HEK293T (cell line): ENCODE measurements at regions of chr4 and their contacts with region 1.

Region 1: DNA sequence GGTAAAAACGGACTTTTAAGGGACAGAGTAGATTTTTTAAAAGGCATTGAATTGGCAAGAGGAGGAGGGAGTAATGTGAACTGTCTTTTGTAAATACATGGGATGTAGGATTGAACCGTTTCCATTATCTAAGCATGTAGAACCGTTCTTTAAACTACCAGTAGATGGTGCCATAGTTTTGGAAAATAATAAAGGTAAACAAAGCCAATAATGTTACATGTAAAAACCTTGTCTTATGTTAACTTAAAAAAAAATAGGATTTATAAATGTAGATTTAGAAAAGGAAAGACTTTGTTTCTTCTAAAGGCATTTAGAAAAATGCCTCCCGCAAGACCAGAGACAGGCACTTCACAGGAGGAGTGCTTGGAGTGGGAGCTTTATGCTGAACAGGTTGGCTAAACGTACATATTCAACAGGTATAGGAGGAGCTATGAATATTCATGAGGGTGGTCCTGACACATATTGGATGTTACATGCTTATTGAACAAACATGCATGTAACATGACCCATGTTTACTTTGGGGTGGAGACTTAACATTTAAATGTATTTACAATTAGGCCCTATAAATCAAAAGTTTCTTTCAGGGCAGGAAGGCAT is 45.5 kb upstream of the FAM241A start:
- DNase-seq: peak; percentile 30

Region 2: DNA sequence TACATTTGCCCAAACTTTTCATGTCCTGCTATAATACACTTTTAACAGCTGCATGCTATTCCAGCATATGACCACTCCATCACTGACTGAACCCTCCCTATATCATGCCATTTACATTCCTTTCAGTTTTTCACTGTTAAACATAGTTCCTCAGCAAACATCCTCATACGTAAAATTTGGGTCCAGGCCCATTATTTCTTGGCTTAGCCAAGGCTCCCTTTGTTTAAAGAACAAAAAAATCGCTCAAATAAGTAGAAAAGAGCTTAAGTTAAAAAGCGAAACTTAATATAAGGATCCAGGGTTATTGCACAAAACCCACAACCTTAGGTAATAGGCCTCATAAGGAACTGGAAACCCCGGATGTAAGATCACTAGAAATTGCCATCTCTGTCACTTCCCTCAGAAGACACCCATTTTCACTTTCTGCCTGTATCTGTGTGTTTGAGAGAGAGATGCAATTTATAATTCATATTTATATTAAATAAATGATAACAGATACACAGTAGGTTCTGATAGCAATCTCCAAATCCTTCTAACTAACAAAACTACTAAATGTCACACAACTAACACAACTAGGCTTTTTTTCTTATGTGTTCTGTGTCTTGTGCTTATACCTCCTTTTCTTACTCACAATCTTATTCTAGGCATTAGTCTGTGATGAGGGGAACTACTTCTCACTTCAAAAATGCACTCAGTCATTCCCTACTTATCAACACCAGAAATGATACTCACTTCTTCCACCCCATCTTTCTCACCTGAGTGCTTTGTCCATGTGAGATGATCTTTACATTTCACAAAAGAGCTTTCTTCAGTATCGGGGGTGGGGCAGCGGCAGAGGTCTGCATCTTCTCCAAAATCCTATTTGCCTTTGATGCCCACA is 14.4 kb before region 1 on chr4:
- CTCF ChIA-PET with region 1: no interaction called
- POLR2A ChIA-PET with region 1: no interaction called
- DNase-seq: no peak

Region 3: GRCh38 chr4:112234952-112235609 is 135.3 kb after region 1 on chr4:
- CTCF ChIA-PET with region 1: interaction called, 18 read pairs
- POLR2A ChIA-PET with region 1: interaction called, 4 read pairs
- DNase-seq: peak; percentile 57